ENCODE measurements at regions of chr5 and their contacts with region 1.

Region 1: GRCh38 chr5:129003226-129003625 is 37.9 kb downstream of the SLC27A6 start:
- DNase-seq: no peak
- ATAC-seq: no peak
- H3K4me3 Mint-ChIP-seq: no peak overlapping the region
- H3K27ac Mint-ChIP-seq: no peak overlapping the region
- H3K4me1 Mint-ChIP-seq: no peaks in the 10 kb centered on the region
- H3K27me3 Mint-ChIP-seq: no peaks in the 10 kb centered on the region
- CTCF ChIP-seq: no peak

Region 2: DNA sequence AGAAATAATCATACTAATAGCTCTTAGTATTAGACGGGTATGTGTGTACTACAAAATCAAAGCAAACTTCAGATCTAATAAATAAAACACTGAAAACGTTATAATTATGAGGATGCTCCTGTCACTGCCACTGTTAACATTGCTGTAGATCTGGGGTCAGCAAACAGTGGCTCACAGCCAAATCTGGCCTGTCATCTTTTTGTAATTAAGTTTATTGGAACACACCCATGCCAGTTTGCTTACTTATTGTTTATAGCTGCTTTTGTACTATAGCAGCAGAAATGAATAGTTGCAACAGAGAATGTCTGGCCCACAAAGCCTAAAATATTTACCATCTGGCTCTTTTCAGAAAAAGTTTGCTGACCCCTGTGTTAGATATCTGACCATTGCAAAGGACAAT is 1453.7 kb before region 1 on chr5:
- CTCF ChIA-PET with region 1: no interaction called
- POLR2A ChIA-PET with region 1: interaction called, 12 read pairs
- intact Hi-C with region 1: no loop called
- DNase-seq: no peak
- ATAC-seq: no peak
- H3K4me3 Mint-ChIP-seq: no peak overlapping the region
- H3K27ac Mint-ChIP-seq: no peak overlapping the region
- H3K4me1 Mint-ChIP-seq: no peaks in the 10 kb centered on the region
- H3K27me3 Mint-ChIP-seq: no peaks in the 10 kb centered on the region
- CTCF ChIP-seq: no peak

Region 3: GRCh38 chr5:128962211-128962610 is 41.0 kb before region 1 on chr5:
- CTCF ChIA-PET with region 1: no interaction called
- POLR2A ChIA-PET with region 1: no interaction called
- intact Hi-C with region 1: no loop called
- DNase-seq: no peak
- ATAC-seq: no peak
- H3K4me3 Mint-ChIP-seq: no peak overlapping the region
- H3K27ac Mint-ChIP-seq: no peak overlapping the region
- H3K4me1 Mint-ChIP-seq: no peaks in the 10 kb centered on the region
- H3K27me3 Mint-ChIP-seq: peaks cover 10% of the 10 kb centered on the region
- CTCF ChIP-seq: no peak

Measured in activated B cell treated with CpG ODN at 0.5 μM for 24 hours (primary cell).